ENCODE measurements at regions of chr17 and their contacts with region 1.

Region 1: GRCh38 chr17:43360739-43361505 is 37.9 kb upstream of the ARL4D start:
- DNase-seq: peak; percentile 69 to 97 (median 91)
- ATAC-seq: peak; percentile 88
- H3K4me3 ChIP-seq: peak overlapping the region; percentile 71
- H3K4me3 Mint-ChIP-seq: peak overlapping the region; percentile 87 to 99 (median 96)
- H3K27ac ChIP-seq: peak overlapping the region; percentile 95
- H3K27ac Mint-ChIP-seq: peak overlapping the region; percentile 98 to 100 (median 100)
- H3K4me1 ChIP-seq: peaks cover 13 to 14% of the 10 kb centered on the region in 2 donors
- H3K4me1 Mint-ChIP-seq: peaks cover 9 to 56% (median 38%) of the 10 kb centered on the region in 7 donors
- H3K27me3 ChIP-seq: no peaks in the 10 kb centered on the region
- H3K27me3 Mint-ChIP-seq: peaks cover 0 to 9% (median 0%) of the 10 kb centered on the region in 5 donors

Region 2: DNA sequence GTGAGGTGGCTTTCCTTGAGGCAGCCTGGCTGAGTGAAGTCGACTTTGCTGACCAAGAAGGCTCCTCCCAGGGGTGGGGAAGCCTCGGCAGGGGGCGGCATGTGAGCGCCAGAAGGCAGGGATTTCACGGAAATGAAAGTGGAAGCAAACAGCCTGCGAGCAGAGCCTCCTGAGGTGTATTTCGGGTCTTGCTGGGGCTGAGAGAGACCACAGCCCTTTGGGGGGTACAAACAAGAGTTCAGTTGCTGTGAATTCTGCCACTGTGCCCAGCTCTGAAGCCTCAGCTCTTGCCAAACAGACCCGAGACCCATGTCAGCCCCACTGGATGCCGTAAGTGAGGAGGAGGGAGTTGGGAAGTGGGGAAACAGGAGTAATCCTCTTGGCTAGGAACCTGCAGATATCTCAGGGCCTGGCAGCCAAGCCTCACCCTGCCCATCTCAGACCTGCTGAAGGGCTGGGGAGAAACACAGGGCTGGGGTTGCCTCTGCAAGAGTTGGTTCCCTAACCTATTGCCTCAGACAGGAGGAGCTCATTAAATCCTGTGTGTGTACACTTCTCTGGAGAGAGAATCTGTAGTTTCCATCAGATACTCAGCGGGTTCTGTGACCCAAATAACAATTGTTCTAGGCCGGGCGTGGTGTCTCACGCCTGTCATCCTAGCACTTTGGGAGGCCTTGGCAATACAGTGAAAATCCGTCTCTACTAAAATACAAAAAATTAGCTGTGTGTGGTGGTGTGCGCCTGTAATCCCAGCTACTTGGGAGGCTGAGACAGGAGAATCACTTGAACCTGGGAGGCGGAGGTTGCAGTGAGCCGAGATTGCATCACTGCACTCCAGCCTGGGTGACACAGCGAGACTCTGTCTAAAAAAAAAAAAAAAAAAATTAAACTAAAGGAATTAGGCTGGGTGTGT is 354.0 kb before region 1 on chr17 and contains the start of gene IFI35:
- CTCF ChIA-PET with region 1: no interaction called
- POLR2A ChIA-PET with region 1: interaction called, 15 read pairs
- intact Hi-C with region 1: loop called in 1 of 2 experiments (anchors 1 kb)
- DNase-seq: peak; percentile 63 to 85 (median 82)
- ATAC-seq: peak; percentile 99
- H3K4me3 ChIP-seq: peak within 1 kb of the TSS; percentile 97
- H3K4me3 Mint-ChIP-seq: peak within 1 kb of the TSS; percentile 86 to 100 (median 100)
- H3K27ac ChIP-seq: peak within 1 kb of the TSS; percentile 99
- H3K27ac Mint-ChIP-seq: peak within 1 kb of the TSS; percentile 94 to 100 (median 100)
- H3K4me1 ChIP-seq: no peaks in the 10 kb centered on the region
- H3K4me1 Mint-ChIP-seq: peaks cover 6 to 25% (median 24%) of the 10 kb centered on the region in 7 donors
- H3K27me3 ChIP-seq: no peaks in the 10 kb centered on the region
- H3K27me3 Mint-ChIP-seq: no peaks in the 10 kb centered on the region
- total RNA-seq, gene IFI35: 23.5 to 145 (median 32.1) TPM

Region 3: DNA sequence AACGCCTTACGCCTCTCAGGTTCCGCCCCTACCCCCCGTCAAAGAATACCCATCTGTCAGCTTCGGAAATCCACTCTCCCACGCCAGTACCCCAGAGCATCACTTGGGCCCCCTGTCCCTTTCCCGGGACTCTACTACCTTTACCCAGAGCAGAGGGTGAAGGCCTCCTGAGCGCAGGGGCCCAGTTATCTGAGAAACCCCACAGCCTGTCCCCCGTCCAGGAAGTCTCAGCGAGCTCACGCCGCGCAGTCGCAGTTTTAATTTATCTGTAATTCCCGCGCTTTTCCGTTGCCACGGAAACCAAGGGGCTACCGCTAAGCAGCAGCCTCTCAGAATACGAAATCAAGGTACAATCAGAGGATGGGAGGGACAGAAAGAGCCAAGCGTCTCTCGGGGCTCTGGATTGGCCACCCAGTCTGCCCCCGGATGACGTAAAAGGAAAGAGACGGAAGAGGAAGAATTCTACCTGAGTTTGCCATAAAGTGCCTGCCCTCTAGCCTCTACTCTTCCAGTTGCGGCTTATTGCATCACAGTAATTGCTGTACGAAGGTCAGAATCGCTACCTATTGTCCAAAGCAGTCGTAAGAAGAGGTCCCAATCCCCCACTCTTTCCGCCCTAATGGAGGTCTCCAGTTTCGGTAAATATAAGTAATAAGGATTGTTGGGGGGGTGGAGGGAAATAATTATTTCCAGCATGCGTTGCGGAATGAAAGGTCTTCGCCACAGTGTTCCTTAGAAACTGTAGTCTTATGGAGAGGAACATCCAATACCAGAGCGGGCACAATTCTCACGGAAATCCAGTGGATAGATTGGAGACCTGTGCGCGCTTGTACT is 235.6 kb before region 1 on chr17 and contains the start of gene BRCA1:
- CTCF ChIA-PET with region 1: no interaction called
- POLR2A ChIA-PET with region 1: no interaction called
- intact Hi-C with region 1: loop called in 1 of 2 experiments (anchors 1 kb)
- DNase-seq: peak; percentile 78 to 98 (median 96)
- ATAC-seq: peak; percentile 100
- H3K4me3 ChIP-seq: peak within 1 kb of the TSS; percentile 83
- H3K4me3 Mint-ChIP-seq: peak within 1 kb of the TSS; percentile 88 to 97 (median 94)
- H3K27ac ChIP-seq: peak within 1 kb of the TSS; percentile 83
- H3K27ac Mint-ChIP-seq: peak within 1 kb of the TSS; percentile 88 to 98 (median 93)
- H3K4me1 ChIP-seq: peaks cover 6 to 8% of the 10 kb centered on the region in 2 donors
- H3K4me1 Mint-ChIP-seq: peaks cover 14 to 39% (median 30%) of the 10 kb centered on the region in 7 donors
- H3K27me3 ChIP-seq: no peaks in the 10 kb centered on the region
- H3K27me3 Mint-ChIP-seq: no peaks in the 10 kb centered on the region
- total RNA-seq, gene BRCA1: 2.6 to 54.1 (median 5.4) TPM

Region 4: DNA sequence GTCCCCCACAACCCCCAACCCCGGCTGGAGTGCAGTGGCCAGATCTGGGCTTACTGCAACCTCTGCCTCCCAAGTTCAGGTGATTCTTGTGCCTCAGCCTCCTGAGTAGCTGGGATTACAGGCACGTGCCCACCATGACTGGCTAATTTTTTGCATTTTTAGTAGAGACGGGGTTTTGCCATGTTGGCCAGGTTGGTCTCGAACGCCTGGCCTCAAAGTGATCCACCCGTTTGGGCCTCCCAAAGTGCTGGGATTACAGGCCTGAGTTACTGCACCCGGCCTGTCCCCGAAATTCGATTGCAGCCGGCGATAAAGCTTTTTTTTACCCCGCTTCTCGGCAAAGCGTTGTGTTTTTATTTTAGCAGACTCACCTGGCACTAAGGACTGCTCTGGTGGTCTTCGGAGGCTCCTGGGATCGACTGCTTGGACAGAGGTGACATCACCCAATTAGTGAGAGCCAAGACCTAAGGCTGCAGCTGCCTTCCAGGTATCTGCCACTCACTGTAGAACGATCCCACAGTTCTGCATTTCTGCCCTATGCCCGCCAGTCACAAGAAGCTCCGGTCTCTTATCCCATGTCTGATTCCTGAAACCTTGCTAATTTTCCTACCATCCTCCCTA is 44.3 kb before region 1 on chr17:
- CTCF ChIA-PET with region 1: interaction called, 5 read pairs
- POLR2A ChIA-PET with region 1: interaction called, 89 read pairs
- intact Hi-C with region 1: loop called (anchors 1 kb)
- DNase-seq: peak in 2 of 9 donors; percentile 13 to 36
- ATAC-seq: no peak
- H3K4me3 ChIP-seq: no peak overlapping the region
- H3K4me3 Mint-ChIP-seq: peak overlapping the region in 5 of 10 donors; percentile 16 to 42 (median 25)
- H3K27ac ChIP-seq: no peak overlapping the region
- H3K27ac Mint-ChIP-seq: peak overlapping the region in 7 of 9 donors; percentile 38 to 79 (median 63)
- H3K4me1 ChIP-seq: no peaks in the 10 kb centered on the region
- H3K4me1 Mint-ChIP-seq: peaks cover 5 to 11% (median 7%) of the 10 kb centered on the region in 7 donors
- H3K27me3 ChIP-seq: no peaks in the 10 kb centered on the region
- H3K27me3 Mint-ChIP-seq: no peaks in the 10 kb centered on the region

Region 5: GRCh38 chr17:43338886-43339516 is 21.9 kb before region 1 on chr17:
- CTCF ChIA-PET with region 1: interaction called, 6 read pairs
- POLR2A ChIA-PET with region 1: interaction called, 21 read pairs
- intact Hi-C with region 1: loop called in 1 of 2 experiments (anchors 1 kb)
- DNase-seq: peak; percentile 37 to 62 (median 55)
- ATAC-seq: no peak
- H3K4me3 ChIP-seq: no peak overlapping the region
- H3K4me3 Mint-ChIP-seq: no peak overlapping the region
- H3K27ac ChIP-seq: no peak overlapping the region
- H3K27ac Mint-ChIP-seq: no peak overlapping the region
- H3K4me1 ChIP-seq: peaks cover 1% of the 10 kb centered on the region in 2 donors
- H3K4me1 Mint-ChIP-seq: peaks cover 3 to 25% (median 11%) of the 10 kb centered on the region in 7 donors
- H3K27me3 ChIP-seq: no peaks in the 10 kb centered on the region
- H3K27me3 Mint-ChIP-seq: peaks cover 0 to 3% (median 0%) of the 10 kb centered on the region in 5 donors

Region 6: GRCh38 chr17:43720311-43721060 is 359.6 kb after region 1 on chr17:
- CTCF ChIA-PET with region 1: no interaction called
- POLR2A ChIA-PET with region 1: interaction called, 4 read pairs
- intact Hi-C with region 1: loop called in 1 of 2 experiments (anchors 10 kb)
- DNase-seq: peak; percentile 60 to 82 (median 74)
- ATAC-seq: peak; percentile 96
- H3K4me3 ChIP-seq: peak overlapping the region; percentile 96
- H3K4me3 Mint-ChIP-seq: peak overlapping the region; percentile 81 to 100 (median 96)
- H3K27ac ChIP-seq: peak overlapping the region; percentile 93
- H3K27ac Mint-ChIP-seq: peak overlapping the region; percentile 89 to 99 (median 95)
- H3K4me1 ChIP-seq: peaks cover 0 to 5% of the 10 kb centered on the region in 2 donors
- H3K4me1 Mint-ChIP-seq: peaks cover 5 to 18% (median 6%) of the 10 kb centered on the region in 7 donors
- H3K27me3 ChIP-seq: no peaks in the 10 kb centered on the region
- H3K27me3 Mint-ChIP-seq: peaks cover 1 to 23% (median 5%) of the 10 kb centered on the region in 5 donors